ENCODE measurements at regions of chr16 and their contacts with region 1.

Region 1: GRCh38 chr16:46607529-46607928 is 13.7 kb downstream of the SHCBP1 start:
- DNase-seq: no peak
- ATAC-seq: no peak
- H3K4me3 ChIP-seq: no peak overlapping the region
- H3K27ac ChIP-seq: no peak overlapping the region
- H3K4me1 ChIP-seq: no peaks in the 10 kb centered on the region
- H3K27me3 ChIP-seq: no peaks in the 10 kb centered on the region
- CTCF ChIP-seq: peak; percentile 27 to 57 (median 41)
- POLR2A ChIP-seq: no peak

Region 2: GRCh38 chr16:46555951-46556350 is 51.6 kb before region 1 on chr16:
- intact Hi-C with region 1: loop called (anchors 2 to 5 kb)
- DNase-seq: no peak
- ATAC-seq: no peak
- H3K4me3 ChIP-seq: no peak overlapping the region
- H3K27ac ChIP-seq: no peak overlapping the region
- H3K4me1 ChIP-seq: peaks cover 0 to 6% (median 0%) of the 10 kb centered on the region in 12 donors
- H3K27me3 ChIP-seq: peaks cover 0 to 26% (median 3%) of the 10 kb centered on the region in 9 donors
- CTCF ChIP-seq: no peak
- POLR2A ChIP-seq: no peak

Region 3: GRCh38 chr16:46688101-46688626 is 80.6 kb after region 1 on chr16:
- intact Hi-C with region 1: no loop called
- DNase-seq: peak in 3 of 5 donors; percentile 32 to 52 (median 34)
- ATAC-seq: no peak
- H3K4me3 ChIP-seq: peak overlapping the region; percentile 52 to 97 (median 87)
- H3K27ac ChIP-seq: peak overlapping the region; percentile 70 to 98 (median 92)
- H3K4me1 ChIP-seq: peaks cover 0 to 65% (median 31%) of the 10 kb centered on the region in 12 donors
- H3K27me3 ChIP-seq: no peaks in the 10 kb centered on the region
- CTCF ChIP-seq: no peak
- POLR2A ChIP-seq: no peak

Region 4: GRCh38 chr16:46711106-46712058 is 103.9 kb after region 1 on chr16:
- intact Hi-C with region 1: no loop called
- DNase-seq: peak; percentile 69 to 84 (median 77)
- ATAC-seq: peak; percentile 71 to 84 (median 78)
- H3K4me3 ChIP-seq: no peak overlapping the region
- H3K27ac ChIP-seq: peak overlapping the region; percentile 9 to 84 (median 68)
- H3K4me1 ChIP-seq: peaks cover 5 to 62% (median 28%) of the 10 kb centered on the region in 12 donors
- H3K27me3 ChIP-seq: no peaks in the 10 kb centered on the region
- CTCF ChIP-seq: no peak
- POLR2A ChIP-seq: no peak